Right lobe of liver (tissue), 6 donors: ENCODE measurements at regions of chr22 and their contacts with region 1.

Region 1: DNA sequence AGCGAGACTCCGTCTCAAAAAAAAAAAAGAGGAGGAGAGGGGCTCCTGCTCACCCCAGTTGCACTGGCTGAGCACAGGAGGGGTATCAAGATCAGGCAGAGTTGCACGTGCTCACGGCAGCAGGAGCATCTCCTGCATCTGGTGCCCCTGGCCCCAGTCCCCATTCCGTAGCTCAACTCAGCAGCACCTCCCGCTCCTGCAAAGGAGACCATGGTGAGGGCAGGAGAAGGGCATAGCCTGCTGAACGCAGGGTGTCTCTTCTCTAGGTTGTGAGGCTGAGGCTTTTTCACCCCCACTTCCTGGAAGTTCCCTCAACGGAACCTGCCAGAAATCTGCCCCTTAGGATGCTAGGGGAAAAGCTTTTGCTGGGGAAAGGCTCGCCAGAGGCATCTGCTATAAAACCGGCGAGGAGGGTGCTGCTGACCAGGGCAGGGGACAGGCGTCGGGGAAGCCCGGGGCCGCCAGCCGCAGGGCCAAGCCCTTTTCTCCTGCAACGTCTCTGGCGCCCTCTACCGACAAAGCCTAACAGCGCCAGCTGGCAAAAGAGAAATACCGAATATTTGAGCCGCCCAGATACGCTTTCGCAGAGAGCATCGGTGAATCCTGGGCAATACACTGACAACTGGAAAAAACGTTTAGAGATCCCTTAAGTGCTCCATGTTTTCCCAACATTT is 1.0 kb upstream of the PPP6R2 start:
- DNase-seq: peak; percentile 88 to 91 (median 90)
- ATAC-seq: peak; percentile 81 to 86 (median 84)
- H3K4me3 ChIP-seq: peak overlapping the region; percentile 74 to 92 (median 86)
- H3K27ac ChIP-seq: peak overlapping the region; percentile 54 to 71 (median 60)
- H3K4me1 ChIP-seq: peaks cover 0 to 6% (median 2%) of the 10 kb centered on the region in 4 donors
- H3K27me3 ChIP-seq: no peaks in the 10 kb centered on the region
- CTCF ChIP-seq: peak; percentile 97 to 99 (median 98)
- POLR2A ChIP-seq: no peak

Region 2: GRCh38 chr22:50250555-50251476 is 91.3 kb before region 1 on chr22 and contains the start of gene HDAC10:
- intact Hi-C with region 1: loop called in 1 of 2 experiments (anchors 5 kb)
- DNase-seq: peak; percentile 88 to 90 (median 89)
- ATAC-seq: peak; percentile 77 to 87 (median 82)
- H3K4me3 ChIP-seq: peak within 1 kb of the TSS; percentile 57 to 80 (median 67)
- H3K27ac ChIP-seq: peak within 1 kb of the TSS in 2 of 3 donors; percentile 39 to 43
- H3K4me1 ChIP-seq: peaks cover 0 to 33% (median 8%) of the 10 kb centered on the region in 4 donors
- H3K27me3 ChIP-seq: no peaks in the 10 kb centered on the region
- CTCF ChIP-seq: no peak
- POLR2A ChIP-seq: peak; percentile 53
- total RNA-seq, gene HDAC10: 19.6 to 30.5 (median 23.0) TPM

Region 3: DNA sequence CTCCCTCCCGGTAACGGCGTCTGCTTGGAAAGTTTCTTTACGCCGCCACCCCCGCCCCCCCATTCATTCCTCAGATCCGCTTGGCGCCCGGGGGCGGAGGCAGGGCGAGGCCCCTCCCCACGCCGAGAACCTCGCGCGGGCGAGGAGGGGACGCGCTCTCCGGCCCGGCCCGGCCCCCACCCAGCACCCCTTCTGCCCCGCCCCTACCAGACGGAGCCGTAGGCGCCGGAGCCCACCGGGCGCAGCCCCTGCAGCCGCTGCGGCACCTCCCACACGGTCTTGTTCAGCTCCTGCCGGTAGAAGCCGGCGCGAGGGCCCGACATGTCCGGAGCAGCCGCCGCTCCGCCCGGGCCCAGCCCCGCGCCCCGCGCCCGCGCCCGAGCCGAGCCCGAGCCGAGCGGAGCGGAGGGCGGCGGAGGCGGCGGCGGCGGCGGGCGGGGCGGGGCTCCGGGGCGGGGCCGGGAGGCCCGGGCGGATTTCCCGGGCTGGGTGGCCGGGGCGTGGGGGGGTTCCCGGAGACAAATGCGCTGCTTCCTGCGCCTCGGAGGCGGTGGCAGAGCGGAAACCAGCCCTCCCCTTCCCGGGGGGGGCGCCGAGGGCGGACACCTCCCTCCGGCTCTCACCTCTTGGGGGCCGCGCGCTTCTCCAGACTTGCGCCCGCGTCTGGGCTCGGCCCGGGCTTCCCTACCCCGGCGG is 72.0 kb before region 1 on chr22 and contains the start of gene MAPK11:
- intact Hi-C with region 1: loop called in 1 of 2 experiments (anchors 5 kb)
- DNase-seq: peak in 1 of 3 donors; percentile 68
- ATAC-seq: peak; percentile 16 to 30 (median 23)
- H3K4me3 ChIP-seq: peak within 1 kb of the TSS; percentile 35 to 42 (median 40)
- H3K27ac ChIP-seq: peak within 1 kb of the TSS in 1 of 3 donors; percentile 7
- H3K4me1 ChIP-seq: peaks cover 6 to 49% (median 24%) of the 10 kb centered on the region in 4 donors
- H3K27me3 ChIP-seq: no peaks in the 10 kb centered on the region
- CTCF ChIP-seq: no peak
- POLR2A ChIP-seq: no peak
- total RNA-seq, gene MAPK11: 1.7 to 6.4 (median 2.5) TPM

Region 4: DNA sequence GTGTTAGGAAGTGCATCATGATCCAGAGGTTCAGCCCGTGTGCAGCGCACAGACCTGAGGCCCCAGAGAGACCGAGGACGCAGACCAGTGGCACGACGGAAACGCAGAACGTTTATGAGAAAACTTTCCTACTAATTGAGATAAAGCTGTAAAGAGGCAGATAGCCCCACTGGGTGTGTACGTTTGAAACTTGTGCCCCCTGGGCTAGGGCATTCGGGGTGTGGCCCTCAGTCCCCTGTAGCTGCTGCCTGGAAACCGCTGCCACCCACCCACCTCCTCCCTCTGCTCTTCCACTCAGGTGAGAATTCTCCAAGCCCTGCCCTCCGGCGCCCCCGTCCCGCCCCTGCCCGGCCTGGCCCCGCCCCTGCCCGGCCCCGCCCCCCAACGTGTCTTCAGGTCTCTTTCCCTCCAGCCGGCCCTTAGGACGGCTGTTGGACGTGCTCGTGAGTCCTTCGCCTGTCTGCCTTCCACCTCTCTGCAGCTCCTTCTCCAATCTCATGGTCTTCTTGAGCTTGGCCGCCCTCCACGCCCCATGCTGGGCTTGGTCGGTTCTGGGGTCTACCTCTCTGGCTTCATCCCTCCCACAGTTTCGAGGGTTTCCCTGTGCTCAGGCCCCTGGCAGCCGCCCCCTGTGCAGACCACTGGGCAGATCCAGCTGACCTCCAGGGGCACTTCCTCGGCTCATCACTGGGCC is 270.6 kb after region 1 on chr22:
- intact Hi-C with region 1: no loop called
- DNase-seq: no peak
- ATAC-seq: peak in 3 of 4 donors; percentile 16 to 53 (median 33)
- H3K4me3 ChIP-seq: no peak overlapping the region
- H3K27ac ChIP-seq: peak overlapping the region in 1 of 3 donors; percentile 50
- H3K4me1 ChIP-seq: peaks cover 0 to 10% (median 4%) of the 10 kb centered on the region in 4 donors
- H3K27me3 ChIP-seq: no peaks in the 10 kb centered on the region
- CTCF ChIP-seq: no peak
- POLR2A ChIP-seq: no peak